ENCODE measurements at regions of chr15 and their contacts with region 1.

Region 1: DNA sequence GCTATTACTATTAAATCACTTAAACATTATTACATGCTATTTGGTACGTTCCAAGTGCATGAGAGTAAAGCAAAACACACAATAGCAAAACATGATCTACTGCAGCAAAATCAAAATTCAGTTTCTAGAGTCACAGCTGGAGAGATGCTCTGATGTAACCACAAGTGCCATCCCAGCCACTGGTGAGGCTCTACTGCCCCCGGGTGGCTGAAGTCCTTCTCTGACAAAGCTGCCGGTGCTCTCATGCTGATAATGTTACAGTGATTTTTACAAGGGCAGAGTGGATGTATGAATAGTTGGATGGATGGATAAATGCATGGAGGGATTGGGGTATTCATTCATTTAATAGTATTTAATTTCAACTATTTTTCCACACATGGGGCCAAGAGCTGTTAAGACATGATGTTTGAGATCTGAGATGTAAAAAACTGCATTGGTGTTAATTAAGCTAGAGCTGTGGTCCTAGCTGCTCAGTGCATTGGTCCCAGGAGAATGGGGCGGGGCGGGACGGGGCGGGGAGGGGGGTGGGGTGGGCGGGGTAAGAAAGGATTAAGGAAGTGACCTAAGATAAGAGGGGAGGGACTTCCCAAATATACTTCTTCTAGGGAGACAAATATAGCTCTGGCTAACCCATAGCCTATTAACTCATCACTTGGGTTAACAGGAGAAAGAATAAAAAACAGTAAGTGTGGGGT is 5.3 kb upstream of the SPESP1 start:
- DNase-seq: peak; percentile 88
- ATAC-seq: peak; percentile 96
- H3K4me3 Mint-ChIP-seq: no peak overlapping the region
- H3K27ac Mint-ChIP-seq: peak overlapping the region; percentile 1
- H3K4me1 Mint-ChIP-seq: peaks cover 5% of the 10 kb centered on the region; the same call in 1 of the 2 replicates
- H3K27me3 Mint-ChIP-seq: peaks cover 8% of the 10 kb centered on the region
- CTCF ChIP-seq: peak; percentile 72

Region 2: GRCh38 chr15:68559345-68560310 is 365.4 kb before region 1 on chr15:
- CTCF ChIA-PET with region 1: interaction called, 24 read pairs
- POLR2A ChIA-PET with region 1: no interaction called
- DNase-seq: peak; percentile 89
- ATAC-seq: peak; percentile 85
- H3K4me3 Mint-ChIP-seq: peak overlapping the region; percentile 94
- H3K27ac Mint-ChIP-seq: peak overlapping the region; percentile 72
- H3K4me1 Mint-ChIP-seq: peaks cover 29% of the 10 kb centered on the region
- H3K27me3 Mint-ChIP-seq: peaks cover 20% of the 10 kb centered on the region
- CTCF ChIP-seq: peak; percentile 91

Region 3: GRCh38 chr15:68700455-68701123 is 224.4 kb before region 1 on chr15:
- CTCF ChIA-PET with region 1: interaction called, 16 read pairs
- POLR2A ChIA-PET with region 1: no interaction called
- DNase-seq: peak; percentile 33
- ATAC-seq: peak; percentile 71
- H3K4me3 Mint-ChIP-seq: peak overlapping the region; percentile 38
- H3K27ac Mint-ChIP-seq: no peak overlapping the region; the same call in 1 of the 2 replicates
- H3K4me1 Mint-ChIP-seq: peaks cover 26% of the 10 kb centered on the region
- H3K27me3 Mint-ChIP-seq: peaks cover 4% of the 10 kb centered on the region; the same call in 1 of the 2 replicates
- CTCF ChIP-seq: no peak

Region 4: DNA sequence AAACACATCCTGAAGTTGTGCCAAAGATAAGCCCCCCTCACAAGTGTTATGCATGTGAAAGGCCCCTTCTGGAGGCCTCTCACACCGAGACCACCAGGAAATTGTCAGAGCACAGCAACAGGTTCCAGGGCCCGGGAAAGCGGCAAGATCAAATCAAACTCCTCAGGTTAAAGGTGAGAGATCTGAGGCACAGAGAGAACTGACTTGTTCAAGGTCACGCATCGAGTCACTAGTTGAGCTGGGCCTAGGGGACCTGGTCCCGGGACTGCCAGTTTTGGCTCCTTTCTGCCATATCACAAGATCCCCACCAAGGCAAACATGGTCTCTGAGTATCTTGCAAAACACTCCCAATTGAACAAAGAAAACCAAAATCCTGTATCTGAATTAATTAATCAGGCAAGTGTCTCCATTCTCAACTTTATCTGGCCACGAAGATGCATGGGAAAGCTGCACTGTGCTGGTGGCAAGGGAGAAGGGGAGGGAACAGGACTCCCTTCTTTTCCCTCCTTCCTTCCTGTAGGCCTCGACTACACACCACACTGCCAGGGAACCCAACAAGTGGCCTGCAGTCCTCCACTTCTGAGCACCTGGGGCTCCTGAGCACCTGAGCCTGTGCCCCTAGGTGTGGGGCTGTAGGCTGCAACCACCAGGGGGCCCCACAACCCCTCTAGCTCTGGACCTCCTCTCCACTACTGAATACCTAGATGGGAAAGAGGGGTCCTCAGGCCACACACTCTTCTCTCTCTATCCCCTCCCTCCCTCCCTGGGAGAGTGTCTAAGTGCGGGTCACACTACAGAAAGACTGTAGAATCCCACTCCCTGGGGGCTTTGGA is 141.6 kb before region 1 on chr15:
- CTCF ChIA-PET with region 1: interaction called, 20 read pairs
- POLR2A ChIA-PET with region 1: no interaction called
- DNase-seq: peak; percentile 77
- ATAC-seq: peak; percentile 93
- H3K4me3 Mint-ChIP-seq: 0 out of 2 replicates have a peak overlapping the region, but pooled peaks have one; percentile 1
- H3K27ac Mint-ChIP-seq: peak overlapping the region; percentile 83
- H3K4me1 Mint-ChIP-seq: peaks cover 37% of the 10 kb centered on the region
- H3K27me3 Mint-ChIP-seq: no peaks in the 10 kb centered on the region
- CTCF ChIP-seq: peak; percentile 74

Region 5: DNA sequence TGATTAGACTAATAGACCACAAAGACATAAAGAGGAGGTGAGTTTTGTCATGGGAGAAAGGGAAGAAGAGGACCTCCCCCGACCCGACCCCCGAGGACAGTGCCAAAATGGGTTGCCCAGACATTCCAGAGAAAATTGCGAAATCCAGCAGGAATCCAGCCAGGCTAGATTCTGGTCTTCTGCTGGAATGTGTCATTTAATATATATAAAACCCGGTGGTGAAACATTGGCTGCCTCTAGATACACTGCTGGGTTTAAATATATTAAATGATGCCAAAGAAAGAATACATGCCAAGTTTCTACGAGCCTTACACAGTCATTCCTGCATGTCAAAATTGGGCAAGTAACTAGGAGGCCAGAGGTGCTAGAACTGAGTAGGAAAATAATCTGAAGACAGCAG is 39.9 kb before region 1 on chr15:
- CTCF ChIA-PET with region 1: interaction called, 15 read pairs
- POLR2A ChIA-PET with region 1: no interaction called
- DNase-seq: peak; percentile 24
- ATAC-seq: no peak; the same call in 1 of the 2 replicates
- H3K4me3 Mint-ChIP-seq: no peak overlapping the region
- H3K27ac Mint-ChIP-seq: no peak overlapping the region
- H3K4me1 Mint-ChIP-seq: peaks cover 12% of the 10 kb centered on the region
- H3K27me3 Mint-ChIP-seq: no peaks in the 10 kb centered on the region
- CTCF ChIP-seq: no peak

Measured in WTC11 (cell line).